Sigmoid colon (tissue), 7 donors: ENCODE measurements at regions of chr15 and their contacts with region 1.

Region 1: DNA sequence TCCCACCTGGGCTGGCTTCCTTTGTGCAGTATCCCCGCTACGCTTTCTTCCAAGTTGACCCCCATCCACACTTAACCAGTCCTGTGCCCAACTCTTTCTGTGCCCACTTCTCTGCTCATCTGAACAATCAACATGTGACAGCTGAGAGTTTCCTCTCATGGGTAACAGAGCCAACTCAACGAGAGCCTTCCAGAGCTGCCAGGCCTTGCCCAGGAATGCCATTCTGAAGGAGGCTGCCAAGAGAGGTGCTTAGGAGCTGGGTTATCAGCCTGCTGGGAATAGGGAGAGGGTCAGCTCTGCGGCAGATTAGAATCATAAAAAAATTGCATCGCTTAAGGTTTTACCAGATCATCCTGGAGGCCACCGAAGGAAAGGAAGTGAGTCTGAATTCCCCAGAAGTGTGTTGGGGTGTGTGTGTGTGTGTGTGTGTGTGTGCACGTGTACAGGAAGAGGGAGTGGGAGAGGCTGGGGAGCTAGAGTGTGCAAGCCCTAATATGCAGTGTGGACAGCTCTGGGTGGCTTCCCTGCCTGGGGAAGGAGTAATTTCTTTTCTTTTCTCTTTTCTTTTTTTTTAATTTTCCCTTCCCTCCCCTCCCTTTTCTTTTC is 66.7 kb downstream of the ITGA11 start:
- DNase-seq: no peak
- H3K4me3 ChIP-seq: no peak overlapping the region
- H3K27ac ChIP-seq: peak overlapping the region; percentile 17 to 66 (median 51)
- H3K4me1 ChIP-seq: peaks cover 0 to 29% (median 23%) of the 10 kb centered on the region in 4 donors
- H3K27me3 ChIP-seq: no peaks in the 10 kb centered on the region
- CTCF ChIP-seq: no peak
- EP300 ChIP-seq: no peak
- POLR2A ChIP-seq: no peak

Region 2: GRCh38 chr15:67601073-67601472 is 764.2 kb before region 1 on chr15:
- intact Hi-C with region 1: no loop called
- DNase-seq: no peak
- H3K4me3 ChIP-seq: no peak overlapping the region
- H3K27ac ChIP-seq: no peak overlapping the region
- H3K4me1 ChIP-seq: no peaks in the 10 kb centered on the region
- H3K27me3 ChIP-seq: no peaks in the 10 kb centered on the region
- CTCF ChIP-seq: no peak
- EP300 ChIP-seq: no peak
- POLR2A ChIP-seq: no peak

Region 3: DNA sequence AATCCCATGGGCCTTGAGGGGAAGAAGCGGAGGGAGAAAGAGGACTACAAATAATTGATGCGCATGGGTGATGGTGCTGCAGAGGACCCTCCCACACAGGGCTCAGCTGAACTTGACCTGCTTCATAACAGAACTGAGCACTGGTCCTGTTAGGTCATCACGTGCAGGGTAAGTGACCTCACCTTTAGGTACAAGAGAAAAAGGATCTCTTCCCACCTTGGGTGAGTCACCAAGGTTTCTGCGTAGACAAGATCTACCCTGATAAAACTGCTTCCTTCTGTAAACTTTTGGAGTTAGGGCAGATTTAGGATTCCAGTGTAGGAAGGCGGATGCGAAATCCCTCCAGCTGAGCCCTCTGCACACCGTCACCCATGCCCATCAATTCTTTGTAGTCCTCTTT is 20.6 kb before region 1 on chr15:
- intact Hi-C with region 1: loop called (anchors 2 kb)
- DNase-seq: no peak
- H3K4me3 ChIP-seq: no peak overlapping the region
- H3K27ac ChIP-seq: no peak overlapping the region
- H3K4me1 ChIP-seq: peaks cover 0 to 15% (median 13%) of the 10 kb centered on the region in 4 donors
- H3K27me3 ChIP-seq: no peaks in the 10 kb centered on the region
- CTCF ChIP-seq: no peak
- EP300 ChIP-seq: no peak
- POLR2A ChIP-seq: no peak